Activated T-helper 2 cell treated with anti-CD3 and anti-CD28 coated beads, Interferon-gamma antibody, Interleukin-2, Interleukin-4, amounts not matched to agents 10 μg/mL and 5 μg/mL and 100 μg/mL, durations not matched to agents 14 hours and 24 hours and 36 hours (primary cell): ENCODE measurements at regions of chr18 and their contacts with region 1.

Region 1: DNA sequence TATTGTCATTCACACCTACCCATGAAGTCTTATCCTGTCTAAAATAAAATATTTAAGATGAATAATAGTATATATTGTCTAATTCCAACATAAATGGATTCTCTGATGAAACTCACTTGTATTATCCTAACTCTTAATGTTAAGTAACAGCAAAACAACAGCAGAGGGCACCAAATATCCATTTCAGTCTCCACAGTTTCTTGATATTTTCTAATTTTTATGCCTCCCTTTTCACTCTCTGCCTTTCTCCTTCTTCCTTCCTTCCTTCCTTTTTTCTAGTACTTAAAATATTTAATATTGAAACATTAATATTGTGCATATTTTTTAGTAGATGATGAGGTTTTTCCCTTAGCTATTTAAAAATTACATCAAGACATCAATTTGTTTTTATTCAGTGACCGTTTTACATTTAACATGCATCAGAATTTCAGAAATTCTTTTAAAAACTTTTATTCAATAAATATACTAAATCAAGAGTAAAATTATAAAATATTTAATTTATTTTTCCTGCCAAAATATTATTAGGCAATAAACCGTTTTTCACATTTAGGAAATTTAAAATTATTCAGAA is 97.6 kb downstream of the WDR7 start:
- DNase-seq: no peak
- H3K4me3 Mint-ChIP-seq: no peak overlapping the region
- H3K27ac Mint-ChIP-seq: no peak overlapping the region
- H3K4me1 Mint-ChIP-seq: peaks cover 27% of the 10 kb centered on the region
- H3K27me3 Mint-ChIP-seq: no peaks in the 10 kb centered on the region

Region 2: GRCh38 chr18:56211473-56211872 is 537.3 kb before region 1 on chr18:
- intact Hi-C with region 1: no loop called
- DNase-seq: no peak
- H3K4me3 Mint-ChIP-seq: no peak overlapping the region
- H3K27ac Mint-ChIP-seq: no peak overlapping the region
- H3K4me1 Mint-ChIP-seq: no peaks in the 10 kb centered on the region
- H3K27me3 Mint-ChIP-seq: no peaks in the 10 kb centered on the region

Region 3: DNA sequence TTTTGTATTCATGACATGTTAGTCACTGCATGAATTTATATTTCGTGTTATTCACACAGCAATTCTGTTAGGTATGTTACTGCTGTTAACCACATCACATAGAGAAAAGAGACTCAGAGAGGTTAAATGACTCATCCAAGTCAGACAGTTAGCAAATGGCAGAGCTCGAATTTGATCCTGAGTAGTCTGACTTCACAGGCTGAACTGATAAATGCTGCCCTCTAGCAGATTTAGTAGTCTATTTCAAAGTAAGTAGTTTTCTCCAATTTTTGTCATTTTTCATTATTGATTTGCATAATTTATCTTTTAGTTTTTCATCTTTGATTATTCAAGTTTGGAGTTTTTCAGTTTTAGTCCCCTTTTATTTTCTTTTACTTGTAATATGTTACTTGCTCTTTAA is 39.3 kb before region 1 on chr18:
- intact Hi-C with region 1: loop called (anchors 5 kb)
- DNase-seq: peak; percentile 41
- H3K4me3 Mint-ChIP-seq: no peak overlapping the region
- H3K27ac Mint-ChIP-seq: no peak overlapping the region
- H3K4me1 Mint-ChIP-seq: peaks cover 18% of the 10 kb centered on the region
- H3K27me3 Mint-ChIP-seq: no peaks in the 10 kb centered on the region

Region 4: DNA sequence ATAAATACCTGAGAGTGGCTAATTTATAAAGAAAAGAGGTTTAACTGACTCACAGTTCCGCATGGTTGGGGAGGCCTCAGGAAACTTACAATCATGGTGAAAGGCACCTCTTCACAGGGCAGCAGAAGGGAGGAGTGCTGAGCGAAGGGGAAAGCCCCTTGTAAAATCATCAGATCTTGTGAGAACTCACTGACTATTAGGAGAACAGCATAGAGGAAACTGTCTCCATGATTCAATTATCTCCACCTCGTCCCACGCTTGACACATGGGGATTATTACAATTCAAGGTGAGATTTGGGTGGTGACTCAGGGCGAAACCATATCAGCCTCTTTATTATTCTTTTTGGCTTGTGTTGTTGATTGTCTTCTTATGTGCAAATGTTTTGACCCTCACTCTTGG is 21.4 kb before region 1 on chr18:
- intact Hi-C with region 1: loop called (anchors 2 kb)
- DNase-seq: no peak
- H3K4me3 Mint-ChIP-seq: no peak overlapping the region
- H3K27ac Mint-ChIP-seq: peak overlapping the region; percentile 28
- H3K4me1 Mint-ChIP-seq: peaks cover 16% of the 10 kb centered on the region
- H3K27me3 Mint-ChIP-seq: no peaks in the 10 kb centered on the region

Region 5: GRCh38 chr18:57004366-57005121 is 255.8 kb after region 1 on chr18:
- intact Hi-C with region 1: loop called (anchors 5 kb)
- DNase-seq: no peak
- H3K4me3 Mint-ChIP-seq: peak overlapping the region; percentile 23
- H3K27ac Mint-ChIP-seq: peak overlapping the region; percentile 49
- H3K4me1 Mint-ChIP-seq: peaks cover 34% of the 10 kb centered on the region
- H3K27me3 Mint-ChIP-seq: no peaks in the 10 kb centered on the region

Region 6: DNA sequence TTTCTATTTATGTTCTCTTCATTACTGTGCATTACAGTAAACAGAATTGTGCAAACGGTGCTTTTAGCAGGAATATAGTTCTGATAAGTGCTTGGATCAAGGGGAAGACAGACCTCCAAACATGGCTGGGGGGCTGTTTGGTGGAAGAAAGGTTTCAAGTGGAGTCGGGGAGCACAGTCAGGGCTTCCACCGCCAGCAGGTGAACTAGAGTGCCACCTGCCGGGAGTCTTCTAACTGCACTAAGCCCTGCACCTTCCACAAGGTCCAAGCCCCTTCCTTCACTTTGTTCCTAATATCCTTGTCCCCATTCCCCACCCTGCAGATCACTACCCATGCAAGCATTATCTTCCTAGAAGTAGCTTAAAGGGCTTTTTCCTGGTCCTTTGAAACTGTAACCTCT is 697.5 kb after region 1 on chr18:
- intact Hi-C with region 1: loop called (anchors 5 kb)
- DNase-seq: no peak
- H3K4me3 Mint-ChIP-seq: no peak overlapping the region
- H3K27ac Mint-ChIP-seq: no peak overlapping the region
- H3K4me1 Mint-ChIP-seq: peaks cover 3% of the 10 kb centered on the region
- H3K27me3 Mint-ChIP-seq: peaks cover 43% of the 10 kb centered on the region

Region 7: GRCh38 chr18:57561728-57562423 is 813.1 kb after region 1 on chr18:
- intact Hi-C with region 1: loop called (anchors 2 kb)
- DNase-seq: no peak
- H3K4me3 Mint-ChIP-seq: no peak overlapping the region
- H3K27ac Mint-ChIP-seq: no peak overlapping the region
- H3K4me1 Mint-ChIP-seq: no peaks in the 10 kb centered on the region
- H3K27me3 Mint-ChIP-seq: no peaks in the 10 kb centered on the region